ENCODE measurements at regions of chr1 and their contacts with region 1.

Region 1: GRCh38 chr1:150925816-150926741 is at the start of gene SETDB1:
- DNase-seq: peak; percentile 94 to 96 (median 95)
- H3K4me3 ChIP-seq: peak within 1 kb of the TSS; percentile 76
- H3K27ac ChIP-seq: peak within 1 kb of the TSS; percentile 38 to 44
- H3K4me1 ChIP-seq: no peaks in the 10 kb centered on the region
- H3K27me3 ChIP-seq: no peaks in the 10 kb centered on the region
- CTCF ChIP-seq: peak in 1 of 3 donors; percentile 8
- EP300 ChIP-seq: no peak
- POLR2A ChIP-seq: no peak
- total RNA-seq, gene SETDB1: 21.9 to 49.4 (median 40.9) TPM

Region 2: DNA sequence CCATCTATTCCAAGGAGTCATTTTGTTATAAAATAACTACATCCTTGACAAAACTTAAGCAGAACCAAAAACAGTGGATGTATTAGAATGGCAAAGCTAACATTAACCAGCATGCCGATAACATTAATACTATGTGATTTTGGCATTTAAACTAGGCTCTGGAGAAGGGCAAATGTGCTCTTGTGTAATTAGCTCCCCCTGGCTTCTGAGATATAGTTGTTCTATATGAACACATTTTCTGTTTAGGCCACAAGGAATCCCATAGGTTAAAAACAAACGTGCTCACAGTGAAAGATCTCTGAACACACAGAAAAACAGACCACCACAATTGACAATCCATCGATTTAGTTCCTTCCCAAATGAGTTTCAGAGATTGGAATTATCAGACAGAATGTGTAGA is 496.3 kb before region 1 on chr1:
- intact Hi-C with region 1: no loop called
- DNase-seq: no peak
- H3K4me3 ChIP-seq: no peak overlapping the region
- H3K27ac ChIP-seq: no peak overlapping the region
- H3K4me1 ChIP-seq: peaks cover 2% of the 10 kb centered on the region
- H3K27me3 ChIP-seq: no peaks in the 10 kb centered on the region
- CTCF ChIP-seq: no peak
- EP300 ChIP-seq: no peak
- POLR2A ChIP-seq: no peak

Region 3: GRCh38 chr1:150881331-150882070 is 44.6 kb before region 1 on chr1:
- intact Hi-C with region 1: loop called in 1 of 4 experiments (anchors 1 kb)
- DNase-seq: peak in 1 of 5 donors; percentile 46
- H3K4me3 ChIP-seq: no peak overlapping the region
- H3K27ac ChIP-seq: no peak overlapping the region
- H3K4me1 ChIP-seq: no peaks in the 10 kb centered on the region
- H3K27me3 ChIP-seq: no peaks in the 10 kb centered on the region
- CTCF ChIP-seq: no peak
- EP300 ChIP-seq: no peak
- POLR2A ChIP-seq: no peak

Region 4: DNA sequence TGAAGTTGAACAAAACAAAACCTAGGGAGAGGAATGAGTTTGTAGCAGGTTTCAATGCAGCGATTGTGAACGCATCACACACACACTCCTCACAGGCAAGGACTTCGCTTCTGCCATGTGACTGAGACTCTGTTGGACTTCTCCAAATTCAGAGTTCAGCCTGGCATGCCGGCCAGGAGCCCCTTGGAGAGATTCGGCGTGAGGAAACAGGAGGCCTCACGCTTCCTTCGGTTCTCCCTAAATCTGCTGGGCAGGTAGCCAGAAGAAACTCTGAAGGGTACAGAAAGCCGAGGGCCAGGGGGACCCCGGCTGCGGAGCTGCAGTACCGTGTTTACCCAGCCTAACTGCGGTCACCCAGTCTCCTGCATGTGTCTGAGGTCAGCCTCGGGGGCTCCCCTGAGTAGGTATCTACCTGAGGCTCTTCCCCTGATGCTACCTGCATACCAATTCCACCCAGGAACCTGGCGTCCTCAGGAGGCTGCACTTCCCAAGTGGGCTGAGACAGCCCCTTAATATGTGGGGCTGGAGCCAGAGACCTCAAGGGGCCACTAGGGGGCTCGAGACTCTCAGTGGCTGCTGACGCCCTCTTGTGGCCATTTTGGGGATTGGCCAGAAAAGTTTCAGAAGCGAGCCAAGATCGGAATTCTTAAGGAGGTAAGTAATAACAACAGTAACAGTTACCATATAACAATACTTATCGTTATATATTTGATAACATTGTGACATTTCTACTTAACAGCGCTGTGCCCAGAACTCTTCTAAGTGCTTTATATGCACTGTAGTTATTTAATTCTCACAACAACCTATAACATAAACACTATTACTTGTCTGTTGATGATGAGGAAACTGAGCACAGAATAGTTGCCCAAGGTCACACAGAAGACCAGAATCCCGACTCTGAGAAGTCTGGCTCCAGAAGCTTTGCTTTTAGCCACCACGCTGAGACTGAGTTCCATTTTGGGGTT is 53.3 kb after region 1 on chr1:
- intact Hi-C with region 1: loop called in 1 of 4 experiments (anchors 10 kb)
- DNase-seq: peak; percentile 86 to 94 (median 90)
- H3K4me3 ChIP-seq: no peak overlapping the region
- H3K27ac ChIP-seq: peak overlapping the region; percentile 24 to 58
- H3K4me1 ChIP-seq: peaks cover 6% of the 10 kb centered on the region
- H3K27me3 ChIP-seq: no peaks in the 10 kb centered on the region
- CTCF ChIP-seq: peak; percentile 98 to 100 (median 99)
- EP300 ChIP-seq: no peak
- POLR2A ChIP-seq: no peak

Measured in ovary (tissue), 10 donors.